Posterior vena cava (tissue), 2 donors: ENCODE measurements at regions of chr3 and their contacts with region 1.

Region 1: GRCh38 chr3:188627652-188628051 is 473.7 kb downstream of the LPP start:
- DNase-seq: no peak

Region 2: GRCh38 chr3:188472331-188472730 is 155.3 kb before region 1 on chr3:
- intact Hi-C with region 1: no loop called
- DNase-seq: no peak

Region 3: GRCh38 chr3:188687389-188687788 is 59.7 kb after region 1 on chr3:
- intact Hi-C with region 1: loop called in 1 of 2 experiments (anchors 5 kb)
- DNase-seq: no peak